ENCODE measurements at regions of chr6 and their contacts with region 1.

Region 1: GRCh38 chr6:130020907-130021629 is 2.7 kb downstream of the L3MBTL3 start:
- DNase-seq: peak; percentile 71
- H3K4me3 Mint-ChIP-seq: peak overlapping the region; percentile 97
- H3K27ac Mint-ChIP-seq: peak overlapping the region; percentile 93
- H3K4me1 Mint-ChIP-seq: peaks cover 34% of the 10 kb centered on the region
- H3K27me3 Mint-ChIP-seq: peaks cover 22% of the 10 kb centered on the region

Region 2: GRCh38 chr6:129490521-129491245 is 530.4 kb before region 1 on chr6:
- intact Hi-C with region 1: loop called (anchors 2 kb)
- DNase-seq: peak; percentile 69
- H3K4me3 Mint-ChIP-seq: peak overlapping the region; percentile 77
- H3K27ac Mint-ChIP-seq: peak overlapping the region; percentile 99
- H3K4me1 Mint-ChIP-seq: peaks cover 68% of the 10 kb centered on the region
- H3K27me3 Mint-ChIP-seq: no peaks in the 10 kb centered on the region

Region 3: DNA sequence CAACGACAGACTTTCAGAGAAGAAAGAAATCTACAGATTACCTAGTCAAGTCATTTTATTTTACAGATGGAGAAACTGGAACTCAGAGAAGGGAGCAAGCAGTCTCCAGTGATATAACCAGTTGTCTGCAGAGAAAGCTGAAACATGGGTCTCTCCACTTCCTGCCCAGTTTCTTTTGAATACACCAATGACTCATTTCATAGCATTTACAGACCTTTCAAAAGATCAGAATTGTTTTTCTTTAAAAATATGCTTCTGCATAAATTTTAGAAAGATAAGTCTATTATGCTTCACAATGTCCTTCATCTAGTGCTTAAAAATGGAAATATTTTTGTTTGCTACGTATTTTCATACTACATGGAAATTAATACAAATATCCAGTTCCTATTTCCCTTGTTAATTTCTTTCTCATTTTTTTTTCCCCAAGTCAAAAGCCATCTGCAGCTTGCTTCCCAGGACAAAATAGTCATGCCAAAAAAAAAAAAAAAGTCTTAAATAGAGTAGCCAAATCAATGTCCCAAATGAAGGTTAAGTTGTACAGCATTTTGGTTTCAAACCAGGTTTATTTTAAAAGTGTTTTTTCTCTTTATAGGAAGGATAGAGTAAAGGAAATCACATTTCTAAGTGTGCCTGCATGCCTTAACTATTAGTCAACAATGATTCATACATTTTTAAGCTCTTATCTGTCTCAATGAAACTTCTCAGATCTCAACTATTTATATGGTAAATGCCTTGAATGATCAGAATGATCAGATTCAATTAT is 348.0 kb before region 1 on chr6:
- intact Hi-C with region 1: loop called (anchors 1 kb)
- DNase-seq: peak; percentile 20
- H3K4me3 Mint-ChIP-seq: peak overlapping the region; percentile 66
- H3K27ac Mint-ChIP-seq: peak overlapping the region; percentile 95
- H3K4me1 Mint-ChIP-seq: peaks cover 56% of the 10 kb centered on the region
- H3K27me3 Mint-ChIP-seq: no peaks in the 10 kb centered on the region

Region 4: DNA sequence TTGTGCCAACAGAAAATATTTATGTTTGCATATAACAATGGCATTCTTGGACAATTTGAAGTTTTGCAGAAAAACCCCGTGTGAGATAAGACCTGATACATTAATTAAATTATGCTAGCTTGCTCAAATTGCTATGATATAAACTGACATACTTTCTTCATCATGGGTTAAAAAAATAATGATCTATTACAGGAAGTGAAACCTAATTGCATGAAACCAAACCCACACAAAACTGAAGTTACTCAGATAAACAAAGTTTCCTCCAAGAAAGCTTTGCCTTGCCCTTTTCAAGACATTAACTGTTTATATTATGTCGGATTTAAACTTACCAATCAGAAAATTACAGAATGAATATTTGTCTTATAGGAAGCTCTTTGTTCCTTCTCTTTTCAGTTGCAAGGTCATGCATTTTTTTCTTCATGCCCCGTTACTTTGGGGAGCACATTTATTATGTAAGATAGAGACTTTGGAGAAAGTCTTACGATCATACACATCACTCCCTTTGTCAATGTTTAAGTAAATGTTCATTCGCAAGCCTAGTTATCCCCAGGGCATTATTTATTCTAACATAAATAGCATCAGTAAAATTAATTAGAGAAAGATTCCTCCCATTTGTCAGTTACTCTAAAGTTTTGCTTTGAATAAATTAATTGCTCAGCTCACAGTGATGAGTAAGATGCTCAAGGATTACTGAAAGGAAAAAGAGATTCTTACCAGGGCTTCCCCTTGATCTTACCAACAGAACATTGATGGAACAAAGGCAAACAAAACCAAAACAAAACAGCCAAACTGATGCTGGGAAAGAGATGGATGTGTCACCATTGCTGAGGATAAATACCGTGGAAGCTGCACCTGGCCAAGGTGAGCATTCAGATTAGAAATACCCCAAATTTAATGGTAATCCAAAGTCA is 145.2 kb before region 1 on chr6:
- intact Hi-C with region 1: loop called (anchors 5 kb)
- DNase-seq: no peak
- H3K4me3 Mint-ChIP-seq: no peak overlapping the region
- H3K27ac Mint-ChIP-seq: peak overlapping the region; percentile 18
- H3K4me1 Mint-ChIP-seq: peaks cover 13% of the 10 kb centered on the region
- H3K27me3 Mint-ChIP-seq: peaks cover 4% of the 10 kb centered on the region

Region 5: DNA sequence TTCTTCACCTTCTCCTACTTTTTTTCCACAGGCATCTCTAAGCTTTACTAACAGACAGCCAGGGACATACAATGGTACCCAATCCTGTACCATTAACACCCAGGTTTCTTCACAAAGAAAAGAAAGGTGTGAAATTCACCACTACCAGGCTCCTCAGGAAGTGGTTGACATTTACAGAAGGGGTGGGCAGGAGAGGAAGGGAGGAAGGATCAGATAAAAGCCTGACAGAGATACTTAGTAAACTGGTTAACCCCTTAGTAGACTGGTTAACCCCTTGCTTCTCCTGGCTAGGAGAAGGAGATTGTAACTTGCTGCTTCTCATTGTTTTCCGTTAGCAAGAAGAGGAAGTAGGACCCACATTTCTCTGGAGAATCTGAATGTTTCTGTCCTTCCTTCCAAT is 194.5 kb after region 1 on chr6:
- intact Hi-C with region 1: loop called (anchors 2 kb)
- DNase-seq: peak; percentile 49
- H3K4me3 Mint-ChIP-seq: peak overlapping the region; percentile 70
- H3K27ac Mint-ChIP-seq: peak overlapping the region; percentile 67
- H3K4me1 Mint-ChIP-seq: peaks cover 70% of the 10 kb centered on the region
- H3K27me3 Mint-ChIP-seq: no peaks in the 10 kb centered on the region

Region 6: GRCh38 chr6:131627724-131628682 is 1606.9 kb after region 1 on chr6 and contains the start of gene MED23:
- intact Hi-C with region 1: loop called (anchors 10 kb)
- DNase-seq: peak; percentile 92
- H3K4me3 Mint-ChIP-seq: peak within 1 kb of the TSS; percentile 99
- H3K27ac Mint-ChIP-seq: peak within 1 kb of the TSS; percentile 94
- H3K4me1 Mint-ChIP-seq: peaks cover 36% of the 10 kb centered on the region
- H3K27me3 Mint-ChIP-seq: no peaks in the 10 kb centered on the region
- total RNA-seq, gene MED23: 34.0 and 36.3 TPM in 2 replicates